Ascending aorta (tissue), 2 donors: ENCODE measurements at regions of chr20 and their contacts with region 1.

Region 1: GRCh38 chr20:46894971-46895905 is 595 bp downstream of the EYA2 start:
- DNase-seq: no peak
- H3K4me3 ChIP-seq: peak overlapping the region; percentile 42 to 61
- H3K27ac ChIP-seq: peak overlapping the region; percentile 19 to 34
- H3K4me1 ChIP-seq: no peaks in the 10 kb centered on the region
- H3K27me3 ChIP-seq: no peaks in the 10 kb centered on the region
- CTCF ChIP-seq: no peak

Region 2: GRCh38 chr20:46945465-46945864 is 50.2 kb after region 1 on chr20:
- intact Hi-C with region 1: loop called (anchors 5 kb)
- DNase-seq: no peak
- H3K4me3 ChIP-seq: no peak overlapping the region
- H3K27ac ChIP-seq: peak overlapping the region in 1 of 2 donors; percentile 11
- H3K4me1 ChIP-seq: peaks cover 0 to 6% of the 10 kb centered on the region in 2 donors
- H3K27me3 ChIP-seq: no peaks in the 10 kb centered on the region
- CTCF ChIP-seq: no peak

Region 3: GRCh38 chr20:47038566-47039560 is 143.6 kb after region 1 on chr20:
- intact Hi-C with region 1: loop called (anchors 10 kb)
- DNase-seq: no peak
- H3K4me3 ChIP-seq: no peak overlapping the region
- H3K27ac ChIP-seq: no peak overlapping the region
- H3K4me1 ChIP-seq: peaks cover 4% of the 10 kb centered on the region in 2 donors
- H3K27me3 ChIP-seq: no peaks in the 10 kb centered on the region
- CTCF ChIP-seq: no peak